ENCODE measurements at regions of chr13 and their contacts with region 1.

Region 1: GRCh38 chr13:26062844-26063444 is 11.1 kb upstream of the SHISA2 start:
- DNase-seq: peak; percentile 63 to 67
- H3K4me3 ChIP-seq: no peak overlapping the region
- H3K4me1 ChIP-seq: peaks cover 4% of the 10 kb centered on the region; the same call in 1 of the 2 replicates
- H3K27me3 ChIP-seq: no peaks in the 10 kb centered on the region

Region 2: GRCh38 chr13:25372284-25373081 is 690.5 kb before region 1 on chr13:
- in situ Hi-C with region 1: loop called (anchors 25 kb)
- DNase-seq: peak in 1 of 2 experiments; percentile 59
- H3K4me3 ChIP-seq: peak overlapping the region; percentile 40
- H3K4me1 ChIP-seq: 0 out of 2 replicates have a peak, but pooled peaks cover 2% of the 10 kb centered on the region
- H3K27me3 ChIP-seq: 0 out of 2 replicates have a peak, but pooled peaks cover 2% of the 10 kb centered on the region

Region 3: DNA sequence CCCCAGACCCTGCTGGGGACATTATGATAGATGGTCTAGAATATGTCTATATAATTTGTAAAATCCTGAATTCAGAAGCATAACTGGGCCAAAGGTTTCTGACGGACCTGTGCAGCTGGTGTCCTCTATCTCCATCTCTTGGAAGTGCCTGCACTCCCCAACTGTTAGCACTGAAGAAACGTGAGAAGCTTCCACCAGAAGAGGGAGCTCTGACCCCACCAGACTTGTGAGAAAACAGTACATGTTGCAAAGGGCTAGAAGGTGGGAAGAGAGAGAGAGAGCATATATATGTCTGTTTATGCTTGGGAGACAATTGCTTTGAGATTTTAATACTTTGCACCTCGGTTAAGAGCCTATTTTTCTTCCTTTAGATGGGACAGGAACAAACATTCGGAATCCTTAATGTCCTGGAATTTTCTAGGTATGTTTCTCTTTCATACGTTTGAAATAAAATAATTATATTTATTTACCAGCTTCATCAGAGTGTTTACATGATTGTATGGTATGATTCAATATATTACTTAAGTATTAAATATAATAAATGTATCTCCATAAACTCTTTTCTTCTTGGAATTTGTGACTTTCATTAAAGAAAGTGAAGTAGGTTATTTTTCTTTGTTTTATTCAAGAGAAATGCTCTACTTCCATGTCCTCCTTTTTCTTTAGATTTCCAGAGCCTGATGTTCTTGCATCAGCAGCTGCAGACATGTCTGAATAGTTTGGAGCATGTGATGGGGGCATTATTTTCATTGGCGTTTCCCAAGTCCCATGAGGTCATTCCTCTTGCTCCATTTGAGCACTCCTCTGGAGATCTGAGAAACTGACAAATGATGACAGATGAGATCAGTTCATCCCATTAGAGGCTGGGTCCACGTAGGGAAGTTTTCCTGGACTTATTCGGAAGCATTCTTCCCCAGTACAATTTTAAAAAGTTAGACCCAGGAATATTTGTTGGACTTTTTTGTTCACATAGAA is 488.2 kb before region 1 on chr13:
- in situ Hi-C with region 1: loop called (anchors 5 kb)
- DNase-seq: peak; percentile 81 to 91
- H3K4me3 ChIP-seq: no peak overlapping the region
- H3K4me1 ChIP-seq: peaks cover 10% of the 10 kb centered on the region
- H3K27me3 ChIP-seq: no peaks in the 10 kb centered on the region

Region 4: DNA sequence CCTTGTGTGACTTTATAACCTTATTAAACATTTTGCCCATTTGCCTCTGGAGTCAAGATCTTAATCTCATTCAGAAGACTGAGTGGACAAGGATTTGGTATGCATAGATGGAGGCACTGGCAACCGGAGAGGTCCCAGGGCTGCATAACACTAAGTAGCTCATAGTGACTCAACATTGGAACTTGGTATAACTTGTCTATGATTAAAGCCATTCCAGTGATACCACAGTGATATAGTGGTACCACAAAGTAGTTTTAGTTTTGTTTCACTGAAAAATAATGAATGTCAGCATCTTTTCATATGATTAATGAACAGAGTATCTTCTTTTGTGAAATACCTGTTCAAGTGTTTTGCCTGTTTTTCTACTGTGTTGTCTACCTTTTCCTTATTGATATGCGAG is 217.4 kb after region 1 on chr13:
- in situ Hi-C with region 1: no loop called
- DNase-seq: no peak
- H3K4me3 ChIP-seq: no peak overlapping the region
- H3K4me1 ChIP-seq: no peaks in the 10 kb centered on the region
- H3K27me3 ChIP-seq: no peaks in the 10 kb centered on the region

Measured in HAP-1 (cell line).